ENCODE measurements at regions of chr2 and their contacts with region 1.

Region 1: GRCh38 chr2:166361351-166362153 is 14.2 kb downstream of the SCN9A start:
- DNase-seq: peak in 1 of 2 experiments; percentile 17
- H3K4me3 ChIP-seq: no peak overlapping the region
- H3K4me3 Mint-ChIP-seq: no peak overlapping the region
- H3K27ac Mint-ChIP-seq: no peak overlapping the region
- H3K4me1 ChIP-seq: peaks cover 7% of the 10 kb centered on the region; the same call in 1 of the 2 replicates
- H3K4me1 Mint-ChIP-seq: peaks cover 6% of the 10 kb centered on the region
- H3K27me3 ChIP-seq: no peaks in the 10 kb centered on the region
- H3K27me3 Mint-ChIP-seq: no peaks in the 10 kb centered on the region
- CTCF ChIP-seq: peak; percentile 41 to 66

Region 2: DNA sequence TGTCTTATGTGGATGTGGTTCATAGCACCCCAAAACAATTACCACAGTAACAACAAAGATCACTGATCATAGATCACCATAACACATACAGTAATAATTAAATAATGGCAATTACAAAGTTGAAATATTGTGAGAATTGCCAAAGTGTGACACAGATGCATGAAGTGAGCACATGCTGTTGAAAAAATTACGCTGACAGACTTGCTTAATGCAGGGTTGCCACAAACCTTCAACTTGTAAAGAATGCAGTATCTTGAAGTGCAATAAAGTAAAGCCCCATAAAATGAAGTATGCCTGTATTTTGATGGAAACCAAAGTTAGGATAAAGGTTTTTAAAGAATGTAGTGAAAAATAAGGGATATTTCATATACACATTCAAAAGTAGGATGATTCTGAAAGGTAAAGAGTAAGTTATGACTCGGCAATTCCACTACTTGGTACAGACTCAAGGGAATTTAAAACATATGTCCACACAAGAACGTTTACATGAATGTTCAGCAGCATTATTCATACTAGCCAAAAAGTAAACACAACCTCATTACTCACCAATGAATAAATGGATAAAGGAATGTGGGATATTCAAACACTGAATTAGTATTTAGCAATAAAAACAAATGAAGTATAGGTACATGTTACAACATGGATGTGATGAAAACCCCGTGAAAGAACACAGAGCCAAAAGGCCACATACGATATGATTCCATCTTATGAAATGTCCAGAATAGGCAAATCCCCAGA is 47.4 kb before region 1 on chr2:
- CTCF ChIA-PET with region 1: no interaction called
- POLR2A ChIA-PET with region 1: no interaction called
- intact Hi-C with region 1: no loop called
- DNase-seq: no peak
- H3K4me3 ChIP-seq: no peak overlapping the region
- H3K4me3 Mint-ChIP-seq: no peak overlapping the region
- H3K27ac Mint-ChIP-seq: no peak overlapping the region
- H3K4me1 ChIP-seq: no peaks in the 10 kb centered on the region
- H3K4me1 Mint-ChIP-seq: no peaks in the 10 kb centered on the region
- H3K27me3 ChIP-seq: no peaks in the 10 kb centered on the region
- H3K27me3 Mint-ChIP-seq: no peaks in the 10 kb centered on the region
- CTCF ChIP-seq: no peak

Region 3: GRCh38 chr2:166375736-166376487 is 14.4 kb after region 1 on chr2 and contains the start of gene SCN9A:
- CTCF ChIA-PET with region 1: interaction called, 7 read pairs
- POLR2A ChIA-PET with region 1: no interaction called
- intact Hi-C with region 1: loop called (anchors 1 kb)
- DNase-seq: peak; percentile 77 to 87
- H3K4me3 ChIP-seq: peak within 1 kb of the TSS; percentile 65
- H3K4me3 Mint-ChIP-seq: peak within 1 kb of the TSS; percentile 78
- H3K27ac Mint-ChIP-seq: peak within 1 kb of the TSS; percentile 5
- H3K4me1 ChIP-seq: peaks cover 30% of the 10 kb centered on the region; the same call in 1 of the 2 replicates
- H3K4me1 Mint-ChIP-seq: peaks cover 17% of the 10 kb centered on the region
- H3K27me3 ChIP-seq: no peaks in the 10 kb centered on the region; the same call in 1 of the 2 replicates
- H3K27me3 Mint-ChIP-seq: peaks cover 2% of the 10 kb centered on the region
- CTCF ChIP-seq: peak in 1 of 2 experiments; percentile 1
- total RNA-seq, gene SCN9A: 14.3 and 18.5 TPM in 2 replicates

Region 4: GRCh38 chr2:166384774-166385173 is 23.2 kb after region 1 on chr2:
- CTCF ChIA-PET with region 1: no interaction called
- POLR2A ChIA-PET with region 1: no interaction called
- intact Hi-C with region 1: loop called (anchors 1 kb)
- DNase-seq: peak in 1 of 2 experiments; percentile 11
- H3K4me3 ChIP-seq: no peak overlapping the region
- H3K4me3 Mint-ChIP-seq: no peak overlapping the region
- H3K27ac Mint-ChIP-seq: no peak overlapping the region
- H3K4me1 ChIP-seq: no peaks in the 10 kb centered on the region
- H3K4me1 Mint-ChIP-seq: no peaks in the 10 kb centered on the region
- H3K27me3 ChIP-seq: no peaks in the 10 kb centered on the region
- H3K27me3 Mint-ChIP-seq: peaks cover 8% of the 10 kb centered on the region
- CTCF ChIP-seq: peak in 1 of 2 experiments; percentile 28

Region 5: DNA sequence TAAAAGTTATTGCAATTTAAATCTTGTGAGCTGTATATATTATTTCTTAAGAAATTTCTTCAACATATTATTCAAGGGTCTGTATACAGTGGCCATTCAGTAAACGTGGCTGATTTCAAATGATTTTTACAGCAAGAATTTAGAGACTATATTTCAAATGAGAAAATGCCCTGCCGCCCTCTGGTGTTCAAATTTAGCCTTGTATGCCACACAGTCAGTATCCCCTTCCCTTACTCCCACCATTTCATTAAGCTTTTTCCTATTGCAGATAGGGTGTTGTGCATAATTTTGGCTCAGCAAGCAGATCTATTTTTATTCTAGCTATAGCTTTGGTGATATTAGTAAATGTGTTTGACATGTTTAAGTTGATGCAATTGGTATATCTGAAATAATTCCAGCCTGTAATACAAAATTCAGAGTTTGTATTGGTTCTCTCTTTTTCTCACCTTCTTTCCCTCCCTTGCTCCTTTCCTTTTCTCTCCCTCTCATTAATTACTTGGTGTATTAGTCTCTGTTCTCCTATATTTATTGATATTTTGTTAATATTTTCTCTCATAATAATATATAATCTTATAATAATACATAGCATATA is 155.3 kb after region 1 on chr2:
- CTCF ChIA-PET with region 1: no interaction called
- POLR2A ChIA-PET with region 1: no interaction called
- intact Hi-C with region 1: loop called (anchors 1 kb)
- DNase-seq: peak; percentile 27 to 47
- H3K4me3 ChIP-seq: no peak overlapping the region
- H3K4me3 Mint-ChIP-seq: no peak overlapping the region
- H3K27ac Mint-ChIP-seq: no peak overlapping the region
- H3K4me1 ChIP-seq: no peaks in the 10 kb centered on the region
- H3K4me1 Mint-ChIP-seq: no peaks in the 10 kb centered on the region
- H3K27me3 ChIP-seq: no peaks in the 10 kb centered on the region
- H3K27me3 Mint-ChIP-seq: peaks cover 2% of the 10 kb centered on the region
- CTCF ChIP-seq: peak; percentile 66 to 72